Breast epithelium (tissue), 4 donors: ENCODE measurements at regions of chr1 and their contacts with region 1.

Region 1: GRCh38 chr1:19651141-19651737 is 7.1 kb downstream of the NBL1 start:
- DNase-seq: no peak
- H3K4me3 ChIP-seq: peak overlapping the region in 2 of 3 donors; percentile 18 to 51
- H3K27ac ChIP-seq: peak overlapping the region; percentile 76 to 98
- H3K4me1 ChIP-seq: peaks cover 13 to 15% of the 10 kb centered on the region in 2 donors
- H3K27me3 ChIP-seq: no peaks in the 10 kb centered on the region
- CTCF ChIP-seq: peak in 2 of 3 donors; percentile 51 to 54
- POLR2A ChIP-seq: no peak

Region 2: DNA sequence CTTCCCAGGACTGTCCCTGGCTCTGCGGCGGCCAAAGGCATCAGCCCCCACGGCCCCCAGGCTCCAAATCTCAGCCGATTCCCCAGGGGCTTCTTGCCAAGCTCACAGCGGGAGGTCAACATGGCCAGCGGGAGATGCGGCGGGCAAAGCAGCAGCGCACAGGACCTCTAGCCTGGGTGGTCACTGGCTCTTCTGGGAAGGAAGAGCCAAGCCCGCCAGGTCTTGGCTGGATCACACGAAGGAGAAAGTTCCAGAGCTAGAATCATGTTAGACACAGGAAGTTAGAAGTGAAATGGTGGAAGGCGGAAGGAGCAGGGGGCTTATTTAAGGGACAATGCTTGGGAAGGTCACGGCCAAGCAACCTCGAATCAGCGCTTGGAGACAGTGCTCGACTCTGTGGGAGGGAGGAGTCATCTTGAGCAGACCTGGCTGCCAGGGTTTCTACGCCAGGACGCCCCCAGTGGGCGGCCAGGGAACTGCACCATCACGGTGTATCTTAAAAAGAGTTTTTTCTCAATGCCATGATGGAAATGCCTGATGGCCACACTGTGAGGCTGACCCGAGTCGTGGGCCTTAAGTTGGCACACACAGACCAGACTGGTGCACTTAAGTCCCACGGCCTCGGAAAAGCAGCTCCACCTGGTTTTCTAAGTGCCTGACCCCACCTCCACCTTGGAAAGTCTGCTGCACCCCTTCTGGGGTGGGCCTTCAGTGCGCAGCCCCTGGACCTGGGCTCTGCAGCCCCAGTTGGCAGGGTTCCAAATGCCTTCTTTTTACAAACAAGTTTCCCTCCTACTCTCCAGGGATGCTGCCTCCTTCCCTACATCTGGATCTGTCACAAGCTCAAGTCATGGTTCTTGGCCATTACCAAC is 309.8 kb before region 1 on chr1:
- intact Hi-C with region 1: loop called (anchors 10 kb)
- DNase-seq: peak in 1 of 2 donors; percentile 78
- H3K4me3 ChIP-seq: no peak overlapping the region
- H3K27ac ChIP-seq: peak overlapping the region; percentile 33 to 58
- H3K4me1 ChIP-seq: peaks cover 4 to 6% of the 10 kb centered on the region in 2 donors
- H3K27me3 ChIP-seq: no peaks in the 10 kb centered on the region
- CTCF ChIP-seq: peak; percentile 65 to 88 (median 82)
- POLR2A ChIP-seq: no peak

Region 3: GRCh38 chr1:19398309-19398760 is 252.9 kb before region 1 on chr1:
- intact Hi-C with region 1: loop called (anchors 5 kb)
- DNase-seq: no peak
- H3K4me3 ChIP-seq: no peak overlapping the region
- H3K27ac ChIP-seq: peak overlapping the region in 1 of 2 donors; percentile 14
- H3K4me1 ChIP-seq: peaks cover 0 to 7% of the 10 kb centered on the region in 2 donors
- H3K27me3 ChIP-seq: no peaks in the 10 kb centered on the region
- CTCF ChIP-seq: peak in 1 of 3 donors; percentile 15
- POLR2A ChIP-seq: no peak